Calu3 (cell line): ENCODE measurements at regions of chr2 and their contacts with region 1.

Region 1: GRCh38 chr2:54925022-54925421 is 125.2 kb downstream of the RTN4 start:
- DNase-seq: no peak
- H3K4me3 Mint-ChIP-seq: no peak overlapping the region
- H3K27ac Mint-ChIP-seq: no peak overlapping the region
- H3K4me1 Mint-ChIP-seq: no peaks in the 10 kb centered on the region
- H3K27me3 Mint-ChIP-seq: peaks cover 25% of the 10 kb centered on the region
- CTCF ChIP-seq: no peak

Region 2: DNA sequence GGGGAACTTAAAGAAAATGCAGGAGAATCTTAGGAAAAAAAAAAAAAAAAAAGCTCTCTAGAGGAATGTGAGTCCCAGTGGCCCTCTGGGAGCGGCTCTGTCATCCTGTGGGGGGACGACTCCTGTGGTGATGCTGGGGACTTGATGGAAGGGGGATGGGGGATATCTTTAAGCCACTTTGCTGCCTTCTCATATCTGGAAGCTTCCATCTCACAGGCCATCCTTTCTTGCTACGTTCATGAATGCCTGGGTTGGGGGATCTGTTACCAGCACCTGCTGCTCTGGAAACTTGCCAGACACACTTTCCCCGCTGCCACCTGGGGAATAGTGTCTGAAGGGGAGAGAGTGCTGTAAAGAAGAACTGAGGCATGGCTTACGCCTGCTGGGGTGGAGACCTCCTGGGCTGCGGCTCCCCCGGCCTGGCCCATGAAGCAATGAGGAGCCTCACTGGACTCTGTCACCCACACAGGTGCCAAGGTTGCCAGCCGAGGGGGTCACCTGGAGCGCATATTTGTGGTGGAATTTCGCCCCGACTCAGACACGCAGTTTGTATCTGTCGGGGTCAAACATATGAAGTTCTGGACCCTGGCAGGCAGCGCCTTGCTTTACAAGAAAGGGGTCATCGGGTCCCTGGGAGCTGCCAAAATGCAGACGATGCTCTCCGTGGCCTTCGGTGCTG is 32.4 kb after region 1 on chr2:
- CTCF ChIA-PET with region 1: interaction called, 10 read pairs
- intact Hi-C with region 1: no loop called
- DNase-seq: no peak
- H3K4me3 Mint-ChIP-seq: no peak overlapping the region
- H3K27ac Mint-ChIP-seq: no peak overlapping the region
- H3K4me1 Mint-ChIP-seq: peaks cover 14% of the 10 kb centered on the region
- H3K27me3 Mint-ChIP-seq: no peaks in the 10 kb centered on the region
- CTCF ChIP-seq: no peak

Region 3: GRCh38 chr2:55296393-55296792 is 371.4 kb after region 1 on chr2:
- CTCF ChIA-PET with region 1: no interaction called
- intact Hi-C with region 1: no loop called
- DNase-seq: no peak
- H3K4me3 Mint-ChIP-seq: no peak overlapping the region
- H3K27ac Mint-ChIP-seq: no peak overlapping the region
- H3K4me1 Mint-ChIP-seq: no peaks in the 10 kb centered on the region
- H3K27me3 Mint-ChIP-seq: no peaks in the 10 kb centered on the region
- CTCF ChIP-seq: no peak